CD8-positive, alpha-beta memory T cell (primary cell): ENCODE measurements at regions of chr10 and their contacts with region 1.

Region 1: GRCh38 chr10:110803830-110804338 is 67.8 kb upstream of the PDCD4 start:
- DNase-seq: peak; percentile 11 to 60 (median 42)
- H3K4me3 ChIP-seq: peak overlapping the region; percentile 24
- H3K4me3 Mint-ChIP-seq: peak overlapping the region; percentile 12 to 69 (median 52)
- H3K27ac ChIP-seq: no peak overlapping the region
- H3K27ac Mint-ChIP-seq: peak overlapping the region; percentile 16 to 94 (median 84)
- H3K4me1 ChIP-seq: peaks cover 36% of the 10 kb centered on the region
- H3K4me1 Mint-ChIP-seq: peaks cover 35 to 49% (median 41%) of the 10 kb centered on the region in 3 donors
- H3K27me3 ChIP-seq: no peaks in the 10 kb centered on the region
- H3K27me3 Mint-ChIP-seq: no peaks in the 10 kb centered on the region

Region 2: GRCh38 chr10:110834629-110835301 is 30.9 kb after region 1 on chr10:
- CTCF ChIA-PET with region 1: interaction called, 10 read pairs
- POLR2A ChIA-PET with region 1: no interaction called
- DNase-seq: peak in 2 of 5 donors; percentile 50 to 75
- H3K4me3 ChIP-seq: no peak overlapping the region
- H3K4me3 Mint-ChIP-seq: peak overlapping the region in 1 of 7 donors; percentile 38
- H3K27ac ChIP-seq: no peak overlapping the region
- H3K27ac Mint-ChIP-seq: peak overlapping the region in 6 of 8 donors; percentile 61 to 89 (median 74)
- H3K4me1 ChIP-seq: peaks cover 30% of the 10 kb centered on the region
- H3K4me1 Mint-ChIP-seq: peaks cover 17 to 27% (median 18%) of the 10 kb centered on the region in 3 donors
- H3K27me3 ChIP-seq: no peaks in the 10 kb centered on the region
- H3K27me3 Mint-ChIP-seq: no peaks in the 10 kb centered on the region

Region 3: DNA sequence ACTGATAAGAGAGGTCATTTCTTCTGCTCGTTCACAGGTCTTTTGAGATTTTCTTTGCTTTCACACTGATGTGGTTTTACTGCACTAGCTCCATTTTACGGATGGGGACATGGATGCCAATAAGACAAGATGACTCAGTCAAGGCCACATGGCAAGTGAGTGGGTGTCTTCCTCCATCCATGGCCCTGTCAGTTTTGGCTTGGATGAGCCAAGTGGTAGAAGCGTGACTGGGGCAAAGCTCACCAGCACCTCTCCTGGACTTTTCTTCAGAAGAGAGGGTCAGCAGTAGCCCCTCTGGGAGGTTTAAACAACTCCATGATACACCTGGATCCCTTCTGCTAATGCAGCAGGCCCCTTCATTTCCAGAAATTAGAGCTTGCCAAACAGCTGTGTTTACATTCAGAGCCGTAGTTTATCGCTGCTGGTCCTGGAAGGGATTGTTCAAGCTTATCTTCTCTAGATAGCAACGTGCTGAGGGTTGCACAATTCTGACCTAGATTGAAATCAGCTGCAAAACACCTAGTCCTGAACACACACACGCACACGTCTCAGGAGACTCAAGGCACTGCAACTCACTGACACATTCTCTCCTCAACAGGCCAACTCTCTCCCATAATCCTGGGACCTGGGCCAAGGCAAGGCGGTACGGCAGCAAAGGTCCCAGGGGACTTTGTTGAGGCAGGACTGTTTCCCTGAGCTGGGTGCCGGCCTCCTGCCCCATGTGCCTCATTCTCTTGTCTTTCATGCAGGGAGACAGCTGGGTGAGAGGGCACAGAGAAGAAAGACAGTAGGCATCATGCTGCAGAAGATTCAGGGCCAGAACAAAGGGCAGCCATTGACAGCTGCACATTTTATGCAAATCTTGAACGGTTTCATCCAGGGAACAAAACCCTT is 53.6 kb after region 1 on chr10:
- CTCF ChIA-PET with region 1: interaction called, 22 read pairs
- POLR2A ChIA-PET with region 1: interaction called, 3 read pairs
- DNase-seq: peak in 1 of 5 donors; percentile 24
- H3K4me3 ChIP-seq: peak overlapping the region; percentile 23
- H3K4me3 Mint-ChIP-seq: peak overlapping the region; percentile 37 to 79 (median 57)
- H3K27ac ChIP-seq: no peak overlapping the region
- H3K27ac Mint-ChIP-seq: peak overlapping the region; percentile 82 to 98 (median 90)
- H3K4me1 ChIP-seq: peaks cover 90% of the 10 kb centered on the region
- H3K4me1 Mint-ChIP-seq: peaks cover 86 to 91% (median 90%) of the 10 kb centered on the region in 3 donors
- H3K27me3 ChIP-seq: no peaks in the 10 kb centered on the region
- H3K27me3 Mint-ChIP-seq: no peaks in the 10 kb centered on the region

Region 4: DNA sequence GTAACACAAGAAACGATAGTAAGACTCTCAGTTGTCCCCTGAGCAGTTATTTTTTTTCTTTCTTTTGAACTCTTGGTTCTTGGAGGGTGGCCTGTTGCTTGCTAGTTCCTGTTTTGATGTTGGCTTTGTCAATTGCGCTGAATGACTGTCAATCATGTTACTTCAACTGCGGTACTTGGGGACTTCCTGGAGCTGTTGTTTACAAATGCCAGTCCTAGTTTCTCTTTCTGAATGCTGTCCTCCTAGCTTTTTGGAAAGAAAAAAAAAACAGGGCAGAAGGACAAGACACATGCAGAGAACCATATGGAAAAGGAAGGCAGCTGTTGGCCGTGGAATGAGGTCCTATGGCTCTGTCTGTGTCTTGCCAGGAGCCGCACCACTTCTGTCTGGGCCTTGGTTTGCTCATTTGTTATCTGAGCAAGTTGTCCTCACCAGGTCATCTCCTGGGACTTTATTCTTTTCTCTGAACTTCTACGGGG is 60.8 kb after region 1 on chr10:
- CTCF ChIA-PET with region 1: interaction called, 22 read pairs
- POLR2A ChIA-PET with region 1: interaction called, 3 read pairs
- DNase-seq: peak; percentile 26 to 88 (median 80)
- H3K4me3 ChIP-seq: peak overlapping the region; percentile 47
- H3K4me3 Mint-ChIP-seq: peak overlapping the region; percentile 73 to 91 (median 82)
- H3K27ac ChIP-seq: peak overlapping the region; percentile 80
- H3K27ac Mint-ChIP-seq: peak overlapping the region; percentile 97 to 100 (median 98)
- H3K4me1 ChIP-seq: peaks cover 98% of the 10 kb centered on the region
- H3K4me1 Mint-ChIP-seq: peaks cover 98 to 100% (median 100%) of the 10 kb centered on the region in 3 donors
- H3K27me3 ChIP-seq: no peaks in the 10 kb centered on the region
- H3K27me3 Mint-ChIP-seq: peaks cover 0 to 1% of the 10 kb centered on the region in 2 donors

Region 5: GRCh38 chr10:110871298-110872084 is 67.6 kb after region 1 on chr10 and contains the start of gene PDCD4:
- CTCF ChIA-PET with region 1: interaction called, 20 read pairs
- POLR2A ChIA-PET with region 1: interaction called, 6 read pairs
- DNase-seq: peak; percentile 91 to 97 (median 95)
- H3K4me3 ChIP-seq: peak within 1 kb of the TSS; percentile 68
- H3K4me3 Mint-ChIP-seq: peak within 1 kb of the TSS; percentile 90 to 100 (median 95)
- H3K27ac ChIP-seq: peak within 1 kb of the TSS; percentile 77
- H3K27ac Mint-ChIP-seq: peak within 1 kb of the TSS; percentile 97 to 100 (median 98)
- H3K4me1 ChIP-seq: peaks cover 74% of the 10 kb centered on the region
- H3K4me1 Mint-ChIP-seq: peaks cover 68 to 77% (median 69%) of the 10 kb centered on the region in 3 donors
- H3K27me3 ChIP-seq: no peaks in the 10 kb centered on the region
- H3K27me3 Mint-ChIP-seq: peaks cover 0 to 1% of the 10 kb centered on the region in 2 donors
- total RNA-seq, gene PDCD4: 88.4 to 96.1 TPM

Region 6: GRCh38 chr10:110893559-110894179 is 89.8 kb after region 1 on chr10:
- CTCF ChIA-PET with region 1: interaction called, 50 read pairs
- POLR2A ChIA-PET with region 1: no interaction called
- DNase-seq: peak in 2 of 5 donors; percentile 55 to 62
- H3K4me3 ChIP-seq: no peak overlapping the region
- H3K4me3 Mint-ChIP-seq: peak overlapping the region in 2 of 7 donors; percentile 0 to 3
- H3K27ac ChIP-seq: no peak overlapping the region
- H3K27ac Mint-ChIP-seq: peak overlapping the region in 6 of 8 donors; percentile 3 to 66 (median 38)
- H3K4me1 ChIP-seq: peaks cover 10% of the 10 kb centered on the region
- H3K4me1 Mint-ChIP-seq: peaks cover 60 to 84% (median 71%) of the 10 kb centered on the region in 3 donors
- H3K27me3 ChIP-seq: no peaks in the 10 kb centered on the region
- H3K27me3 Mint-ChIP-seq: no peaks in the 10 kb centered on the region

Region 7: DNA sequence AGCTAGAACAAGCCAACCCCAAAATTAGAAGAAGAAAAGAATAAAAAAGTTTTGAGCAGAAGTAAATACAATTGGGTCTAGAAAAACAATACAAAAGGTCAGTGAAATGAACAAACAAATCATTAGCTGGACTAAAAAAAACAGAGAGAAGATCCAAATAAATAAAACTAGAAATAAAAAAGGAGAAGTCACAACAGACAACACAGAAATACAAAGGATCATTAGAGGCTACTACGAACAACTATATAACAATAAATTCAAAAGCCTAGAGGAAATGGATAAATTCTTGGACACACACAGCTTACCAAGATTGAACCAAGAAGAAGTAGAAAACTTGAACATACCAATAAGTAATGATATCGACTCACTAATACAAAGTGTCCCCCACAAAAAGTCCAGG is 259.6 kb after region 1 on chr10:
- CTCF ChIA-PET with region 1: no interaction called
- POLR2A ChIA-PET with region 1: no interaction called
- DNase-seq: no peak
- H3K4me3 ChIP-seq: no peak overlapping the region
- H3K4me3 Mint-ChIP-seq: no peak overlapping the region
- H3K27ac ChIP-seq: no peak overlapping the region
- H3K27ac Mint-ChIP-seq: no peak overlapping the region
- H3K4me1 ChIP-seq: no peaks in the 10 kb centered on the region
- H3K4me1 Mint-ChIP-seq: no peaks in the 10 kb centered on the region
- H3K27me3 ChIP-seq: no peaks in the 10 kb centered on the region
- H3K27me3 Mint-ChIP-seq: peaks cover 29 to 62% of the 10 kb centered on the region in 2 donors